Mammary epithelial cell (primary cell): ENCODE measurements at regions of chr16 and their contacts with region 1.

Region 1: DNA sequence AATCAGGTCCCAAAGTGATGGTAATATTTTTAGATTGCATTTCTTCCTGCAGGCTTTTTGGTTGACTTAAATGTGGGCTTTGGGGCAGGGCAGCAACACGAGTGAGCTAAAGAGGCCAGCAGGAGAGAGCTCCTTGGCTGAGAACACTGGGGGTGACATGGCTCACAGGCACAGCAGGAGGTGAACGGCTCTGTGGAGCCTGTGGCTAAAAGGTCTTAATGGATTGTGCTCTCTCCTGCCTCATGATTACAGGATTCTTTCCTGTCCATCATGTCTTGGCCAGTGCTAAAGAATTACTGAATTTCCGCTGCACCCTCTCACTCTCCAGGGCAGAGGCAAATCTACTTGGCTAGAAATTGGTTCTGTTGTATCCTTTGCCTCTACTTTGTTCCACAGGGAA is 366.6 kb downstream of the HS3ST4 start:
- DNase-seq: no peak
- H3K4me3 ChIP-seq: no peak overlapping the region
- H3K27ac ChIP-seq: no peak overlapping the region
- H3K4me1 ChIP-seq: no peaks in the 10 kb centered on the region
- H3K27me3 ChIP-seq: no peaks in the 10 kb centered on the region
- CTCF ChIP-seq: no peak

Region 2: DNA sequence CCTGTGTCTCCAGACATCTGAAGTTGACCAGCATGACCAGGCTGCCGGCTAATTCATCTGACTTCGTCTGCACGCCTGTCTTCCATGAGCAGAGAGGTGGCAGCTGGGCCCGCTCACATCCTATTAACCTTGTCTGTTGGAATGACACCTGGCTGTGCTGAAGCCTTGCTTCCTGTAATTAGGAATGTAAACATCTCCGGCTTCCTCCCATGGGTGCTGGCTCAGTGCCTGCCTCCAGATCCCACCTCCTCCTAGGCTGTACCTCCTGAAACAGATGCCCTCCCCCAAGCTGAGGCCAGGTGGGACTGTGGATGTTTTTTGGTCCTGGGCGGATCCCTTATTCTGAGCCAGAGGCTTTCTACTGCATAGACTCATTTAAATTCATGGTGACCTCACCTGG is 70.2 kb before region 1 on chr16:
- CTCF ChIA-PET with region 1: no interaction called
- dilution Hi-C with region 1: loop called (anchors 5 kb)
- in situ Hi-C with region 1: no loop called
- intact Hi-C with region 1: no loop called
- DNase-seq: no peak
- H3K4me3 ChIP-seq: no peak overlapping the region
- H3K27ac ChIP-seq: no peak overlapping the region
- H3K4me1 ChIP-seq: no peaks in the 10 kb centered on the region
- H3K27me3 ChIP-seq: no peaks in the 10 kb centered on the region
- CTCF ChIP-seq: no peak

Region 3: DNA sequence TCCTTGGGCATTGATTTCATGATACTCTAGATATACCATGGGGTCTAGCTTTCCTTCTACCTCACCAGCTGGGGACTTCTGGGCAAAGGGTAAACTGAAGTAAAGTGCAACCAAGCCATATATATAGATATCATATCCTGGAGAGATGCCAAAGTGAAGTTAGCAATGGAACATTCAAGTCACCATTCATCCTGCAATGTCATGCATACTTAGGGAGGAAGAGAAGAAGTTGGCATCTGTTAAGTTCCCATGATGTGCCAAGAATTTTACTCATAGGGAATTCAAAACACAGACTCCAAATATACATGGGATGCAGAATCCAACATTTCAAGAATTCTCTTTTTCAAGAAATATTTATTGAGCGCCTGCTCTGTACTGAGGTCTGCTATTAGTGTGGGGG is 33.2 kb after region 1 on chr16:
- CTCF ChIA-PET with region 1: no interaction called
- dilution Hi-C with region 1: loop called (anchors 5 kb)
- in situ Hi-C with region 1: no loop called
- intact Hi-C with region 1: no loop called
- DNase-seq: no peak
- H3K4me3 ChIP-seq: no peak overlapping the region
- H3K27ac ChIP-seq: no peak overlapping the region
- H3K4me1 ChIP-seq: no peaks in the 10 kb centered on the region
- H3K27me3 ChIP-seq: no peaks in the 10 kb centered on the region
- CTCF ChIP-seq: no peak

Region 4: GRCh38 chr16:26413780-26414179 is 355.5 kb after region 1 on chr16:
- CTCF ChIA-PET with region 1: no interaction called
- dilution Hi-C with region 1: no loop called
- in situ Hi-C with region 1: no loop called
- intact Hi-C with region 1: no loop called
- DNase-seq: no peak
- H3K4me3 ChIP-seq: no peak overlapping the region
- H3K27ac ChIP-seq: no peak overlapping the region
- H3K4me1 ChIP-seq: no peaks in the 10 kb centered on the region
- H3K27me3 ChIP-seq: no peaks in the 10 kb centered on the region
- CTCF ChIP-seq: no peak